ENCODE measurements at regions of chr2 and their contacts with region 1.

Region 1: GRCh38 chr2:224145751-224146355 is 106.8 kb upstream of the SERPINE2 start:
- DNase-seq: peak; percentile 91
- H3K4me3 Mint-ChIP-seq: peak overlapping the region; percentile 42
- H3K27ac Mint-ChIP-seq: peak overlapping the region; percentile 97
- H3K4me1 Mint-ChIP-seq: peaks cover 45% of the 10 kb centered on the region
- H3K27me3 Mint-ChIP-seq: no peaks in the 10 kb centered on the region
- CTCF ChIP-seq: no peak

Region 2: DNA sequence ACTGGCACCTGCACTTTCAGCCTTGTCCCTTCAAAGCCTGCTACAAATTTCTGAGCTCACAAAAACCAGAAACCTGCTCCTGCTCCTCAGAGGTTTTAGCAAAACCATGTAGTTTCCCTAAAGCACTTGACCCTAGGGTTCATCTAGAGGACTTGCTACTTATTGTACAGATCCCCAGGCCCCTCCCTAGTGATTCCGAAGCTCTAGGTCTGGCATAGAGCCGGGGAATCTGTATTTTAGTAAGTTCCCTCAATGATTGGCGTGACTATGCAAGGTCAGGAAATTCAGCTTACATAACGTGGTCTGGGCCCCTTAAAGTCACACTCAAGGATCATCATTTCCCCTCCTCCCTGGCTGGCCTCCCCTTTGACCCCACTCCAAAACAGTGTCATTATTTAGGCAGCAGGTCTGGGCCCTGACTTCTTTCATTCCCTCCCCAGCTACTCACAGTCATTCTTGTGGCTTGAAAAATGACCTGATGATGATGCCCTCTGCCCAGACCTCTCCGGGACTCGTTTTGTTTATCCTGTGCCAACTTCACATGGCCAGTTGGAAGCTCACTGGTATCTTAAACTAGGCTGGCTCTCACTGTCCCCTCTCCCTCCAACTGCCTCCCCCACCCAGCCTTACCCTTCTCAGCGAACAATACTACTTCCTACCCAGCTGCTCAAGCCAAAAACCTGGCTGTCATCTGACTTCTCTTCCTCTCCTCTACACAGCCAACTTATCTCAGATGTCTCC is 236.7 kb before region 1 on chr2:
- CTCF ChIA-PET with region 1: no interaction called
- POLR2A ChIA-PET with region 1: no interaction called
- intact Hi-C with region 1: no loop called
- DNase-seq: no peak
- H3K4me3 Mint-ChIP-seq: no peak overlapping the region
- H3K27ac Mint-ChIP-seq: no peak overlapping the region
- H3K4me1 Mint-ChIP-seq: peaks cover 11% of the 10 kb centered on the region
- H3K27me3 Mint-ChIP-seq: no peaks in the 10 kb centered on the region
- CTCF ChIP-seq: no peak

Region 3: GRCh38 chr2:223944703-223945531 is 200.9 kb before region 1 on chr2 and contains the start of gene WDFY1:
- CTCF ChIA-PET with region 1: no interaction called
- POLR2A ChIA-PET with region 1: no interaction called
- intact Hi-C with region 1: no loop called
- DNase-seq: peak; percentile 79
- H3K4me3 Mint-ChIP-seq: peak within 1 kb of the TSS; percentile 96
- H3K27ac Mint-ChIP-seq: peak within 1 kb of the TSS; percentile 90
- H3K4me1 Mint-ChIP-seq: peaks cover 30% of the 10 kb centered on the region
- H3K27me3 Mint-ChIP-seq: no peaks in the 10 kb centered on the region
- CTCF ChIP-seq: no peak
- total RNA-seq, gene WDFY1: 36.9 and 41.8 TPM in 2 replicates

Region 4: DNA sequence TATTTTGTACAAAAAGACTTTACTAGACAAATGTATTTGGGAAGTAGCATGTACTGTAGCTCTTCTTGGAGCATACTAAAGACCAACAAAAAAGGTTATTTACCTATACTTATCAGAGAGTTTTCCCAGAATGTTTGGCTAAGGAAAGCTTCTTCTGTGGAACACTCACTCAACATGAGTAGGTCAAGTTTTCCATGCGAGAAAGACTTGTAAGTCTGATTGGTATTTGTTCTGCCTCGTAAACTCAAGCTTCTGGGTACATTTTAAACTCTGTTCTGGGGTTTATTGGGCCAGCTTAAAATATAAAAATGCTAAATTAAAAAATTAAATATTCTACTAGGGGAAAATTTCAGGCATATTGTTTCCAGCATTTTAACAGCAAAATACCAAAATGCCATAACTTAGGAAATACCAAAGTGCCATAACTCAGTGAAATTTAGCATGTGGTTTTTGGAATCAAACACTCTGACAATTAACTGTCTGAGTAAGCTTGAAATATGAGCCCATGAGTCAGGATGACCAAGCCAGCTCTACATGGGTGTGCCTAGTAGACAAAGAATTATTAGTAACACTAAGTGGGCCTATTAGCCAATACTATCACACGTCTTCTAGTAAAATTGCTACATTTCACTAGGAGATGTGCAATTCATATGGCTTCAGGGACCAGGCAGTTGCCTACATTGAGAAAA is 59.5 kb before region 1 on chr2:
- CTCF ChIA-PET with region 1: no interaction called
- POLR2A ChIA-PET with region 1: interaction called, 8 read pairs
- intact Hi-C with region 1: loop called (anchors 2 kb)
- DNase-seq: peak; percentile 94
- H3K4me3 Mint-ChIP-seq: peak overlapping the region; percentile 24
- H3K27ac Mint-ChIP-seq: no peak overlapping the region
- H3K4me1 Mint-ChIP-seq: peaks cover 21% of the 10 kb centered on the region
- H3K27me3 Mint-ChIP-seq: no peaks in the 10 kb centered on the region
- CTCF ChIP-seq: no peak

Region 5: DNA sequence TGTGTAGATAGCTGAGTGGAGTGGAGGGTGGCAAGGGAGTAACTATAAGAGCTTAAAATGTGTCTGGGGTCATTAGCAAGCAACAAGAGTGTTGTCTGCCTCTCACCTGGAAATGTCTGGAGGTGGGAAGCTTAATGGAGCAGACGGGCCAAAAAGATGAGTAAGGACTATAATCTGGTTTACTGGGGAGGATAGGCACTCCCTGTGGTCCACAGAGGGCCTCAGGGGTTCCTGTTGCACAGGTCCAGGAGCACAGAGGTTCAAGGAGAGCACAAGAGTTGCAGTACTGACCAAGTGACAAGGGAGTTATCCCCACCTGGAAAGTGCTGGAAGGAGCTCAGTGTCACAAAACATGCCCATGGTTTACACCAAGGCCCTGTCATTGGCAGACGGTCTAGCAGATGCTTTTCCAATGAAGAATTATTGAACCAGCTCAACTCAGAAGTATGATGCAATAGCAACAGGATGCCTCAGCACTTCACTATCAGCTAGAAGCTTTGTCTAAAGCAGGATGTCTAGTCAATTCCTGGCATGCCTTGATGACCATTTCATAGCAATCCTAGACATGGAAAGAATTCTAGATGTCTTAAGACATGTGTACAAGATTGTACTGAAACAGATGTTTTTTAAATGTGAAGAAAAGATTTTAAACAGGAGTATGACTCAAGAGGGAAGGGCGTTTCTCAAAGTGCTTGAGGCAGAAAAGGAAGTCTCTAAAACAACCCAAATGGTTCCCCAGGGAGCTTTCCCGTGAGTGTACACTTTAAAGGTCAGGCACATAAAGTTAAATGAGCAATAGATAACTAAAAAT is 43.8 kb before region 1 on chr2:
- CTCF ChIA-PET with region 1: no interaction called
- POLR2A ChIA-PET with region 1: no interaction called
- intact Hi-C with region 1: loop called (anchors 2 kb)
- DNase-seq: peak; percentile 66
- H3K4me3 Mint-ChIP-seq: no peak overlapping the region
- H3K27ac Mint-ChIP-seq: peak overlapping the region; percentile 53
- H3K4me1 Mint-ChIP-seq: peaks cover 22% of the 10 kb centered on the region
- H3K27me3 Mint-ChIP-seq: no peaks in the 10 kb centered on the region
- CTCF ChIP-seq: no peak

Region 6: DNA sequence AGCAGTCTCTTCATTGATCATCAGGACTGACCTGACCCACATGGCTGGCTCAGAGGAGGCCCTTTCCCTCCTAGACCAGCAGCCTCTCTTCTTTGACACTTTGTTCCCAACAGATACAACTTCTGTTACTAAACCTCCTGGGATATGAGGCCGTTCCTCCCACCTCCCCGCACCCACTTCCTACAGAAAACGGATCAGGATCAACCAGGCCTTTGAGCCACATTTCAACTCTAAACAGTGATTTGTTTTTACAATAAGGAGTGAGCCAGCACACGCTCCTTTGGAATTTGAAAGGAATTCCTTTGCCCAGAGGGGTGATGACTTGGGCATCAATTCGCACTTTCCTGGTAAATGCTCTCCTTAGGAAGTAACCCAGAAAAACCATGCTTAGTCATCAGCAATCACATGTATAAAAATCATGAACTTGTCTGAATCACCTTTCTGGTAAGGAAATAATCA is 75.6 kb after region 1 on chr2:
- CTCF ChIA-PET with region 1: no interaction called
- POLR2A ChIA-PET with region 1: no interaction called
- intact Hi-C with region 1: loop called (anchors 5 kb)
- DNase-seq: peak; percentile 93
- H3K4me3 Mint-ChIP-seq: no peak overlapping the region
- H3K27ac Mint-ChIP-seq: peak overlapping the region; percentile 99
- H3K4me1 Mint-ChIP-seq: peaks cover 27% of the 10 kb centered on the region
- H3K27me3 Mint-ChIP-seq: no peaks in the 10 kb centered on the region
- CTCF ChIP-seq: no peak

Region 7: DNA sequence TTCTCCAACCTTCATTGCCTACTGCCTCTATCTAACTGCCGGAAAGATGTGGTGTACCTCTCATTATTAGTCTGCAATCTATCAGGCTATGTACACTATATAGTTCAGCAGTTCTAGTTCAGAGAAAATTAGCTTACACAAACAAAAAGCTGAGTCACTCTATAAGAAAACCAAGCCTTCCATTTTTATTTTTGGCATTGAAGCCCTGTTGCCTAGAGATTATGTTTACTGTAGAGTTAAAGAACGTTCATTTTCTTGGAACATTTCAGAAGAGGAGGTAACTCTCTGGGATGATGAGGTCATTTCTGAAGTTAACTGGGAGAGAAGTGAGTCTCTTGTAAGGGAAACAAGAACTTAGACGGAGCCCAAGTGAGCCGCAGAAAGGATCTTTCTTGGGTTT is 122.6 kb after region 1 on chr2:
- CTCF ChIA-PET with region 1: no interaction called
- POLR2A ChIA-PET with region 1: interaction called, 3 read pairs
- intact Hi-C with region 1: loop called (anchors 5 kb)
- DNase-seq: peak; percentile 76
- H3K4me3 Mint-ChIP-seq: no peak overlapping the region
- H3K27ac Mint-ChIP-seq: peak overlapping the region; percentile 76
- H3K4me1 Mint-ChIP-seq: peaks cover 8% of the 10 kb centered on the region
- H3K27me3 Mint-ChIP-seq: no peaks in the 10 kb centered on the region
- CTCF ChIP-seq: no peak

Region 8: GRCh38 chr2:224284134-224284946 is 138.5 kb after region 1 on chr2:
- CTCF ChIA-PET with region 1: interaction called, 6 read pairs
- POLR2A ChIA-PET with region 1: interaction called, 6 read pairs
- intact Hi-C with region 1: loop called (anchors 5 kb)
- DNase-seq: peak; percentile 65
- H3K4me3 Mint-ChIP-seq: no peak overlapping the region
- H3K27ac Mint-ChIP-seq: no peak overlapping the region
- H3K4me1 Mint-ChIP-seq: no peaks in the 10 kb centered on the region
- H3K27me3 Mint-ChIP-seq: peaks cover 25% of the 10 kb centered on the region
- CTCF ChIP-seq: peak; percentile 85

Region 9: GRCh38 chr2:225814554-225814953 is 1668.7 kb after region 1 on chr2:
- CTCF ChIA-PET with region 1: no interaction called
- POLR2A ChIA-PET with region 1: no interaction called
- intact Hi-C with region 1: no loop called
- DNase-seq: no peak
- H3K4me3 Mint-ChIP-seq: no peak overlapping the region
- H3K27ac Mint-ChIP-seq: no peak overlapping the region
- H3K4me1 Mint-ChIP-seq: no peaks in the 10 kb centered on the region
- H3K27me3 Mint-ChIP-seq: no peaks in the 10 kb centered on the region
- CTCF ChIP-seq: no peak

Measured in MCF 10A (cell line).